CD4-positive, alpha-beta T cell (primary cell): ENCODE measurements at regions of chr1 and their contacts with region 1.

Region 1: GRCh38 chr1:27341525-27342252 is at the start of gene SYTL1:
- DNase-seq: peak; percentile 45 to 82 (median 59)
- ATAC-seq: peak; percentile 61
- H3K4me3 ChIP-seq: peak within 1 kb of the TSS; percentile 89
- H3K4me3 Mint-ChIP-seq: peak within 1 kb of the TSS; percentile 98
- H3K27ac ChIP-seq: peak within 1 kb of the TSS; percentile 80 to 84
- H3K27ac Mint-ChIP-seq: peak within 1 kb of the TSS; percentile 94
- H3K4me1 ChIP-seq: peaks cover 63% of the 10 kb centered on the region
- H3K4me1 Mint-ChIP-seq: peaks cover 64% of the 10 kb centered on the region
- H3K27me3 ChIP-seq: no peaks in the 10 kb centered on the region
- H3K27me3 Mint-ChIP-seq: no peaks in the 10 kb centered on the region
- CTCF ChIP-seq: no peak
- total RNA-seq, gene SYTL1: 135 to 140 TPM

Region 2: DNA sequence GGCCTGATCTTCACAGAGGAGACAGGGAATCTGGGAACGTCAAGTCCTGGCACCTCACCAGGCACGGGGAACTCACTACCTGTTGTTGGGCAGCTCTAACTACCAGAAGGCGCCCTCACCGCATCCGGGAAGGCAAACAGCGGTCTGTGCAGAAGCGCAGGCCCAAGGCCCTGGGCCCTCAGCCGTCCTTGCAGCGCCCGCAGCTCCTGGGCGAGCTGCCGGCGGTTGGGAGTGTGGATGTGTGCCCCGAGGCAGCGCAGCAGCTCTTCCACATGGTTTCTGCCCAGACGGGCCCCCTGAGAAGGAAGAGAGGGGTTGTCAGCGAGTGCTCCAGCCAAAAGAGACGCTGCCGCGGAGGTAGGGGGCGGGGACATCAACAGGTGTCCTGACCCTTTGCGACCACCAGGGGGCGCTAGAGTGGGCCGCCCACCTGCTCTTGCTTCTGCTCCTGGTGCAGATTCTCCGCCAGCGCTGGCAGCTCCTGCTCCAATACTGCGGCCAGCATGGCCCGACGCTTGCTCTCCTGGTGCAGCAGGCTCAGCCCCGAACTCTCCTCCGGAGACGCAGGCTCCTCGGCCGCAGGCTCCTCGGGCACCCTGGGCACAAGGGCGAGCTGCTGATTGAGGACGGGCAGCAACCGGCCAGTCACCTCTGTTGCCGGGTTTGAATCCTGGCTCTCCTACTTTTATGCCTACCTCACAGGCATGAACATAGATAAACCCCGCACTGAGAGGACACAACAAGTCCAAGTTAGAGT is 15.8 kb after region 1 on chr1:
- CTCF ChIA-PET with region 1: interaction called, 30 read pairs
- POLR2A ChIA-PET with region 1: interaction called, 56 read pairs
- intact Hi-C with region 1: loop called in 1 of 2 experiments (anchors 2 kb)
- DNase-seq: peak; percentile 70 to 92 (median 80)
- ATAC-seq: peak; percentile 87
- H3K4me3 ChIP-seq: peak overlapping the region; percentile 57
- H3K4me3 Mint-ChIP-seq: peak overlapping the region; percentile 83
- H3K27ac ChIP-seq: peak overlapping the region in 1 of 2 donors; percentile 31
- H3K27ac Mint-ChIP-seq: peak overlapping the region; percentile 75
- H3K4me1 ChIP-seq: peaks cover 61% of the 10 kb centered on the region
- H3K4me1 Mint-ChIP-seq: peaks cover 47% of the 10 kb centered on the region
- H3K27me3 ChIP-seq: no peaks in the 10 kb centered on the region
- H3K27me3 Mint-ChIP-seq: no peaks in the 10 kb centered on the region
- CTCF ChIP-seq: peak; percentile 98

Region 3: GRCh38 chr1:27365372-27366112 is 23.9 kb after region 1 on chr1:
- CTCF ChIA-PET with region 1: interaction called, 3 read pairs
- POLR2A ChIA-PET with region 1: interaction called, 3 read pairs
- intact Hi-C with region 1: loop called in 1 of 2 experiments (anchors 2 kb)
- DNase-seq: peak; percentile 62 to 89 (median 78)
- ATAC-seq: peak; percentile 72
- H3K4me3 ChIP-seq: peak overlapping the region; percentile 70
- H3K4me3 Mint-ChIP-seq: peak overlapping the region; percentile 88
- H3K27ac ChIP-seq: no peak overlapping the region
- H3K27ac Mint-ChIP-seq: peak overlapping the region; percentile 43
- H3K4me1 ChIP-seq: peaks cover 49% of the 10 kb centered on the region
- H3K4me1 Mint-ChIP-seq: peaks cover 49% of the 10 kb centered on the region
- H3K27me3 ChIP-seq: no peaks in the 10 kb centered on the region
- H3K27me3 Mint-ChIP-seq: no peaks in the 10 kb centered on the region
- CTCF ChIP-seq: no peak

Region 4: GRCh38 chr1:28552758-28553663 is 1211.3 kb after region 1 on chr1 and contains the start of gene TRNAU1AP:
- CTCF ChIA-PET with region 1: no interaction called
- POLR2A ChIA-PET with region 1: no interaction called
- intact Hi-C with region 1: loop called in 1 of 2 experiments (anchors 10 kb)
- DNase-seq: peak; percentile 94 to 99 (median 96)
- ATAC-seq: peak; percentile 95
- H3K4me3 ChIP-seq: peak within 1 kb of the TSS; percentile 84
- H3K4me3 Mint-ChIP-seq: peak within 1 kb of the TSS; percentile 99
- H3K27ac ChIP-seq: peak within 1 kb of the TSS; percentile 66 to 68
- H3K27ac Mint-ChIP-seq: peak within 1 kb of the TSS; percentile 99
- H3K4me1 ChIP-seq: peaks cover 22% of the 10 kb centered on the region
- H3K4me1 Mint-ChIP-seq: peaks cover 31% of the 10 kb centered on the region
- H3K27me3 ChIP-seq: no peaks in the 10 kb centered on the region
- H3K27me3 Mint-ChIP-seq: no peaks in the 10 kb centered on the region
- CTCF ChIP-seq: no peak
- total RNA-seq, gene TRNAU1AP: 21.4 to 24.2 TPM